ENCODE measurements at regions of chr19 and their contacts with region 1.

Region 1: DNA sequence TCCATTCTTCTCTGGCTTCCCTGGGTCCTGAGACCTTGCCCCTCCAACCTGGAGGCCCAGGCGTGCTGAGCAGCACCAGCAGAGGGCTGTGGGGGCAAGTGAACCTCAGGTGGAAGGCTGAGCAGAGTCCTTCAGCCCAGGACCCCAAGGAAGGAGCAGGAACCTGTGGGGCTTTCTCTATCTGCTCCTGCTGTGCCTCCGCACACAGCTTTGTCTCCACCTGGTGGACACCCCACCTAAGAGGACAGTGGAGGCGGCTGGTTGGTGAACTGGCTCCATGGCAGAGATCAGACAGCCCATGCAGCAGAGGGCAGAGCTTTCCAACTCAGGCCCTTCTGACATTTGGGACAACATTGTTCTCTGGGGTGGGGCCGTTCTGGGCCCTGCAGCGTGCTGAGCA is 19.7 kb downstream of the ZFR2 start:
- DNase-seq: peak; percentile 56
- H3K4me3 Mint-ChIP-seq: no peak overlapping the region
- H3K27ac Mint-ChIP-seq: no peak overlapping the region
- H3K4me1 Mint-ChIP-seq: no peaks in the 10 kb centered on the region
- H3K27me3 Mint-ChIP-seq: no peaks in the 10 kb centered on the region

Region 2: DNA sequence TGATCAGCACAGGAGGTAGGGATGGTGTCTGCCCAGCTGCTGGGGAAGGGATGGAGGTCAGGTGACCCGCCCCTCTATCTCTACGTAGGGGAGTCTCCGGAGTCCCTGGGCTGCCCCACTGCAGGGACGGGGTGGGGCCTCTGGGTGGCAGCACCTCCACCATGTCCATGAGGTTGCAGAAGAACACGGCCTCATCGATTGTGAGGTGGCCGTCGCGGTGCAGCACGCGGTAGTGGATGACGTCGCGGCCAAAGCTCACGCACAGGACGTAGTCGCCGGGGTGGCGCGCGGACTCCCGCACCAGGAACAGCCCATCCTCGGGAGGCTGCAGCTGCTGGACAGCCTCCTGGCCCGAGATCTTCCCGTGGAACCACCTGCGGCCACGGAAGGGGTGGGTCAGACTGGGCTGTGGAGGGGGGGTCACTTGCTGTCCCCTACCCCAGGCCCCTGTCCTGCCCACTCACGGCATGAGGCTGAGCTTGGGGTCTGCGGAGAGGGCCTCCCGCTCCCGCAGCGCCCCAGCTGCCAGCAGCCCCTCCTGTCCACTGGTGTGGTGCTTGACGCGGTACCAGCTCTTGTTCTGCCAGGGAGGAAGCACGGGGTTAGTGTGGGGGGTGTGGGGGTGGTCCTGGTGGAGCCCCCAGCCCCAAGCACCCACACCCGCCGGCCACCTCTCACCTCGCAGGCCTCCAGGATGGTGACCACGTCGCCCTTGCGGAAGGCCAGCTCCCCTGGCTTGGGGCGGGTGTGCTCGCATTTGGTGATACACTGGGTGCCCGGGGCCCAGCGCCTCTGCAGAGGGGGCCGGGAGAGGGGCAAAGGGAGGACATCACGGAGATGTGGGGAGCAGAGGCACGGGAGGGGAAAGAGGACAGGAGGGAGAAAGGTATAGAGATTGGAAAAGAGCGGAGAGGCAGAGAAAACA is 65.2 kb before region 1 on chr19:
- CTCF ChIA-PET with region 1: interaction called, 10 read pairs
- POLR2A ChIA-PET with region 1: no interaction called
- intact Hi-C with region 1: no loop called
- DNase-seq: peak; percentile 65
- H3K4me3 Mint-ChIP-seq: peak overlapping the region; percentile 77
- H3K27ac Mint-ChIP-seq: no peak overlapping the region
- H3K4me1 Mint-ChIP-seq: peaks cover 8% of the 10 kb centered on the region
- H3K27me3 Mint-ChIP-seq: no peaks in the 10 kb centered on the region

Measured in activated CD4-positive, alpha-beta memory T cell treated with anti-CD3 and anti-CD28 coated beads for 36 hours (primary cell).